CD4-positive, alpha-beta T cell (primary cell): ENCODE measurements at regions of chr18 and their contacts with region 1.

Region 1: GRCh38 chr18:62131301-62131909 is 55.5 kb downstream of the PIGN start:
- DNase-seq: peak; percentile 20 to 81 (median 48)
- ATAC-seq: peak; percentile 63
- H3K4me3 ChIP-seq: no peak overlapping the region
- H3K4me3 Mint-ChIP-seq: no peak overlapping the region
- H3K27ac ChIP-seq: no peak overlapping the region
- H3K27ac Mint-ChIP-seq: no peak overlapping the region
- H3K4me1 ChIP-seq: no peaks in the 10 kb centered on the region
- H3K4me1 Mint-ChIP-seq: no peaks in the 10 kb centered on the region
- H3K27me3 ChIP-seq: no peaks in the 10 kb centered on the region
- H3K27me3 Mint-ChIP-seq: no peaks in the 10 kb centered on the region
- CTCF ChIP-seq: peak; percentile 100

Region 2: DNA sequence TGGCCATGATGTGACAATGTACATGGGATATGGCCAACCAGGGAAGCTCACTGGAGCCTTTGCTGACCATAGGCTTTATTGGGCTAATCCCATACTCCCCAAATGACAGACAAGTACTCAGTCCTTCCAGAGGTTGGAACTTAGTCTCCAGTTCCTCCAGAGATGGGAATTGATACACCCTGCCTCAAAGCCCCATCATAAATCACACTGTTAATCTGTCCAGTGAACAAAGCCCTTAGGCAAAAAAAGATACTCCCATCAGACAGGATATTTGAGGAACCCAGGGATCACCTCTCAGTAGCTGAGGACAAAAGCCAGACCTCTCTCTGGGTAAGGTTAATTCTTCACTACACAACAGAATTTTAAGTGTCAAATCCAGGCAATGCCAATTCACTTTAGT is 1045.6 kb before region 1 on chr18:
- CTCF ChIA-PET with region 1: no interaction called
- POLR2A ChIA-PET with region 1: no interaction called
- intact Hi-C with region 1: loop called in 1 of 2 experiments (anchors 10 kb)
- DNase-seq: no peak
- ATAC-seq: no peak
- H3K4me3 ChIP-seq: no peak overlapping the region
- H3K4me3 Mint-ChIP-seq: no peak overlapping the region
- H3K27ac ChIP-seq: no peak overlapping the region
- H3K27ac Mint-ChIP-seq: no peak overlapping the region
- H3K4me1 ChIP-seq: no peaks in the 10 kb centered on the region
- H3K4me1 Mint-ChIP-seq: no peaks in the 10 kb centered on the region
- H3K27me3 ChIP-seq: no peaks in the 10 kb centered on the region
- H3K27me3 Mint-ChIP-seq: no peaks in the 10 kb centered on the region
- CTCF ChIP-seq: no peak

Region 3: GRCh38 chr18:61322265-61322873 is 809.0 kb before region 1 on chr18:
- CTCF ChIA-PET with region 1: no interaction called
- POLR2A ChIA-PET with region 1: no interaction called
- intact Hi-C with region 1: loop called in 1 of 2 experiments (anchors 10 kb)
- DNase-seq: no peak
- ATAC-seq: no peak
- H3K4me3 ChIP-seq: no peak overlapping the region
- H3K4me3 Mint-ChIP-seq: no peak overlapping the region
- H3K27ac ChIP-seq: no peak overlapping the region
- H3K27ac Mint-ChIP-seq: no peak overlapping the region
- H3K4me1 ChIP-seq: no peaks in the 10 kb centered on the region
- H3K4me1 Mint-ChIP-seq: no peaks in the 10 kb centered on the region
- H3K27me3 ChIP-seq: no peaks in the 10 kb centered on the region
- H3K27me3 Mint-ChIP-seq: peaks cover 6% of the 10 kb centered on the region
- CTCF ChIP-seq: no peak

Region 4: DNA sequence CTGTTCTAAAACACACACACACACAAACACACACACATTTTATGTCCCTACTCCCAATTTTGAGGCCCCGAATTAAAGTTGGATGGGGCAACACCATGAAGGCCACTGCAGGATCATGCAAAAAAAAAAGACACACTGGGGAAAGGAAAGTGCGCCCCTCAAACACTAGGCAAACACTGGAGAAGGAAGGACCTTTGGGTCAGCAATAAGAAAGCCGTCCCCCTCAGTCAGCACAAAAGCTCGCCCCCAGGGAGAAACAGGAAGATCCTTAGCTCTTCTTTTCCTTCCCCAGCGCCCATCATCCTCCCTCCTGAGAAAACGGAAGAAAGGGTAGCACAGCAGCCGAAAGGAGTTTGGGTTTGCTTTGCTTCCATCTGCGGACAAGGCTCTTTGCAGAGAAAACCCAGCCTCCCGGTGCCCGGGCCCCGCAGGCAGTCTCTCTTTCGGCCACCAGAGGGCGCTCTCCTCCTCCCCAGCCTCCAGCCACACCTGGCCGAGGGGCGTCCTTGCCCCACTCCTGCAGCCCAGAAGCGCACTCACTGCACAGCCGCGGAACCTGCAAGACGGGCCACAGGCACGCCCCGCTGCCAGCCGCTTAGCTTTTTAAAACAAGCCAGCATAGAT is 549.7 kb before region 1 on chr18:
- CTCF ChIA-PET with region 1: interaction called, 11 read pairs
- POLR2A ChIA-PET with region 1: no interaction called
- intact Hi-C with region 1: loop called (anchors 1 kb)
- DNase-seq: peak; percentile 45 to 77 (median 56)
- ATAC-seq: peak; percentile 72
- H3K4me3 ChIP-seq: no peak overlapping the region
- H3K4me3 Mint-ChIP-seq: no peak overlapping the region
- H3K27ac ChIP-seq: no peak overlapping the region
- H3K27ac Mint-ChIP-seq: no peak overlapping the region
- H3K4me1 ChIP-seq: peaks cover 8% of the 10 kb centered on the region
- H3K4me1 Mint-ChIP-seq: peaks cover 9% of the 10 kb centered on the region
- H3K27me3 ChIP-seq: peaks cover 14 to 17% of the 10 kb centered on the region in 2 experiments
- H3K27me3 Mint-ChIP-seq: peaks cover 82% of the 10 kb centered on the region
- CTCF ChIP-seq: peak; percentile 95

Region 5: GRCh38 chr18:61635901-61636528 is 495.4 kb before region 1 on chr18:
- CTCF ChIA-PET with region 1: interaction called, 11 read pairs
- POLR2A ChIA-PET with region 1: no interaction called
- intact Hi-C with region 1: loop called (anchors 1 to 2 kb)
- DNase-seq: peak in 11 of 14 experiments; percentile 2 to 53 (median 18)
- ATAC-seq: peak; percentile 41
- H3K4me3 ChIP-seq: no peak overlapping the region
- H3K4me3 Mint-ChIP-seq: no peak overlapping the region
- H3K27ac ChIP-seq: no peak overlapping the region
- H3K27ac Mint-ChIP-seq: no peak overlapping the region
- H3K4me1 ChIP-seq: no peaks in the 10 kb centered on the region
- H3K4me1 Mint-ChIP-seq: no peaks in the 10 kb centered on the region
- H3K27me3 ChIP-seq: peaks cover 0 to 3% of the 10 kb centered on the region in 2 experiments
- H3K27me3 Mint-ChIP-seq: peaks cover 20% of the 10 kb centered on the region
- CTCF ChIP-seq: peak; percentile 39

Region 6: GRCh38 chr18:61901323-61901986 is 229.9 kb before region 1 on chr18:
- CTCF ChIA-PET with region 1: interaction called, 3 read pairs
- POLR2A ChIA-PET with region 1: no interaction called
- intact Hi-C with region 1: loop called (anchors 5 kb)
- DNase-seq: peak in 12 of 14 experiments; percentile 2 to 66 (median 24)
- ATAC-seq: peak; percentile 74
- H3K4me3 ChIP-seq: no peak overlapping the region
- H3K4me3 Mint-ChIP-seq: no peak overlapping the region
- H3K27ac ChIP-seq: no peak overlapping the region
- H3K27ac Mint-ChIP-seq: no peak overlapping the region
- H3K4me1 ChIP-seq: no peaks in the 10 kb centered on the region
- H3K4me1 Mint-ChIP-seq: no peaks in the 10 kb centered on the region
- H3K27me3 ChIP-seq: peaks cover 7 to 9% of the 10 kb centered on the region in 2 experiments
- H3K27me3 Mint-ChIP-seq: peaks cover 51% of the 10 kb centered on the region
- CTCF ChIP-seq: peak; percentile 84

Region 7: GRCh38 chr18:62101321-62101721 is 30.1 kb before region 1 on chr18:
- CTCF ChIA-PET with region 1: no interaction called
- POLR2A ChIA-PET with region 1: no interaction called
- intact Hi-C with region 1: no loop called
- DNase-seq: no peak
- ATAC-seq: no peak
- H3K4me3 ChIP-seq: no peak overlapping the region
- H3K4me3 Mint-ChIP-seq: no peak overlapping the region
- H3K27ac ChIP-seq: no peak overlapping the region
- H3K27ac Mint-ChIP-seq: no peak overlapping the region
- H3K4me1 ChIP-seq: no peaks in the 10 kb centered on the region
- H3K4me1 Mint-ChIP-seq: peaks cover 8% of the 10 kb centered on the region
- H3K27me3 ChIP-seq: no peaks in the 10 kb centered on the region
- H3K27me3 Mint-ChIP-seq: no peaks in the 10 kb centered on the region
- CTCF ChIP-seq: no peak